Upper lobe of right lung (tissue), 1 donor: ENCODE measurements at regions of chr7 and their contacts with region 1.

Region 1: GRCh38 chr7:143008007-143008901 is 18.7 kb downstream of the OR9A2 start:
- DNase-seq: peak; percentile 87
- ATAC-seq: peak; percentile 98
- H3K4me3 ChIP-seq: no peak overlapping the region
- H3K27ac ChIP-seq: no peak overlapping the region
- H3K4me1 ChIP-seq: no peaks in the 10 kb centered on the region
- H3K27me3 ChIP-seq: peaks cover 10% of the 10 kb centered on the region
- CTCF ChIP-seq: peak; percentile 94

Region 2: DNA sequence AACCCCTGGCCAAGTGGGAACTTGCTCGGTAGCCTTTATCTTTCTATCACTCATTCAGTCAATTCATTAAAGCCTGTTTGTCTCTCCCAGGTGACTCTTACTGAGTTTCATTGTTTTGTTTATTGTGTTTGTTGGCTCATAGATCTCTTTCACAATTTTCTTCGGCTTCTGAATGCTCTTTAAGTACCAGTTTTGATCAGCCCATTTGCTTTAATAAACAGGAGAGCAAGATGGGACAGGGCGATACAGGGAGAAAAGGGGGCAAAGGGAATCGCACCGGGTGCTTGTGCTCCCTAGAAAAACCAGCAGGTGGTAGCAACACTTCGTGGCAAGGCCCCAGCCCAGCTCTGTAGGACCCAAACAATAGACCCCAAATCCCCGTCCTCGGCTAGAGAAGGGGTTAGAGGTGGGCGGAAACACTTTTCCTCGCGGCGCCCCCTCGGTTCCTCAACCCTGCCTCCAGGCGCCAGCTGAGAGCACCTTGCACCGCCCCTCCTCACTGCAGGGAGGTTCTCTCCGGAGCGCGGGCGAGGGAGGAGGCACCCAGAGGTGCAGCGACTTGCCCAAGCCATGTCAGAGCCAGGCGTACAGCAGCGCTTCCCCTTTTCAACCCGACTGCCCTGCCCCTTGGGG is 154.4 kb before region 1 on chr7:
- intact Hi-C with region 1: loop called (anchors 10 kb)
- DNase-seq: peak; percentile 87
- ATAC-seq: peak; percentile 88
- H3K4me3 ChIP-seq: peak overlapping the region; percentile 71
- H3K27ac ChIP-seq: peak overlapping the region; percentile 63
- H3K4me1 ChIP-seq: peaks cover 11% of the 10 kb centered on the region
- H3K27me3 ChIP-seq: no peaks in the 10 kb centered on the region
- CTCF ChIP-seq: peak; percentile 78

Region 3: GRCh38 chr7:143188994-143189393 is 180.7 kb after region 1 on chr7:
- intact Hi-C with region 1: no loop called
- DNase-seq: no peak
- ATAC-seq: no peak
- H3K4me3 ChIP-seq: no peak overlapping the region
- H3K27ac ChIP-seq: no peak overlapping the region
- H3K4me1 ChIP-seq: no peaks in the 10 kb centered on the region
- H3K27me3 ChIP-seq: peaks cover 3% of the 10 kb centered on the region
- CTCF ChIP-seq: no peak

Region 4: DNA sequence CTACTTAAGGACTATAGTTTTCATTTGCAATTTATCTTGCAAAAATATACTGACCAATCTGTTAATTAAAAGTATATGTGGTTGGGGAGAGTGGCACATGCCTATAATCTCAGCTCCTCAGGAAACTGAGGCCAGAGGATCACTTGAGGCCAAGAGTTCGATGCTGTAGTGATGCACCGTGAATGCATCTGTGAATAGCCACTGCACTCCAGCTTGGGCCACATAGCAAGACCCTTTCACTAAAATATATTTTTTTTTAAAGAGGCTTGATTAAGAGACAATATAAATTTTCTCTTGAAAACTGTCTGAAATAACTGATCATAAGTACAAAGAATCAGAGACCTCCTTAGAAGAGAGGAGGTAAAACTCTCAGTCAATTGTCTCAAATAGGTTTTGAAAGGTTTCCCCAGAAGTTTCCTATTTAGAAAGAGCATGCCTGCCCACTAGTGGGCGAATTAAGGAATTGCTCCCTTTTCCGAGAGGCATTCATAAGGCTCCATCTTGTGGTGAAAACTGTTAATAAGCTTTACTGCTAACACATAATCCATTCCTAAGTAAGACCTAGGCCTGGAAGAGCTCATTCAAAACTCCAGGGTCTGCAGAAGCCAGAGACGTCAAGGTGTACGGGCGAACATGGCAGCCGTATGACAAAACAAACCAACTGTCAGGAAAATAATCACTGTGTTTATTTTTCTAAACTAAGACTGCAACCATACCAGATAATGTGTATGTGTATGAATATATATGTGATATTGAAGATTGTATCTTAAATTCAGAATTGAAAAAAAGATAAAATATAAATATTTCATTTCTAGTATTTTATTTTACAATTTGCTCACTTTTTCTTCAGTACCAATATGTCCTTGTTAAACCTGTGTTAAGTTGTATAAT is 206.8 kb after region 1 on chr7:
- intact Hi-C with region 1: loop called (anchors 5 kb)
- DNase-seq: no peak
- ATAC-seq: peak; percentile 98
- H3K4me3 ChIP-seq: no peak overlapping the region
- H3K27ac ChIP-seq: no peak overlapping the region
- H3K4me1 ChIP-seq: no peaks in the 10 kb centered on the region
- H3K27me3 ChIP-seq: no peaks in the 10 kb centered on the region
- CTCF ChIP-seq: peak; percentile 99

Region 5: DNA sequence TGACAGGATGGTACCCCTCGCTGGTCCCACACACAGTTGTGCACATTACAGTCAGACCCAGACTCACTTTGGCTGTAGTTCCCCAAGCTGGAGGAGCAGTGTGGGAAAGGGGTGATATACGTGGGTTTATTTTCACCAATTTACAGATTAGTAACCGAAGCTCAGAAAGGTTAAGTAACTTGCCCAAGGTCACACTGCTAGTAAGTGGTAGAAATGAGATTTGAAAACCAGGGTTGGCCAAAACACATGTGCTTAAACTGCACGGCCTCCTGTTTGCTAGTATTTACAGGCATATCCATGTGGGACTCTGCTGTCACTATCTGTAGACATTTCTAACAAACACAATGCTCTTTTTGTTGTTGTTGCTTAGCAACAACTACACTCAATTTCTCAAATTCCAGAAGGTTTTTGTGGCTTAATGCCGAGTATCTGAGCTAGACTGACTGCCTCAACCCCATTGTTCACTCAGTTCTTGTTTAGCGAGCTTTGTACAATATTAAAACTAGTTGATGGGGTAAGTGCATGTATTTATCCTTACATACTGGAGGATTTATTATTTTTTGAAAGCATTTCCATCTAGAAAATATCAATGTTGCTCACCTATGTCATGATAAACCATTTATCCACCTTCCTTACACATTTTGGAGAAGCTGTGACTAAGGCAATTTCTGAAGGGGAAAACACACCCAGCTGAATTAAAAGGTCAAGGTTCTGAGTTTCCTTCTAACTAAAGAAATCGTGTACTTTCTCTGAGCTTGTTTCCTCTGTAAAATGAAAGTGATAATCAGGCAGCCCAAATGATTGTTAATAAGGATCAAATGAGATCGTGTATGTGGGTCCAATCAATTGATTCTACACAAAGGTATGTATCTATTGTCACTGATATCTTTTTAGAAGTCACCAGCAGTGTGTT is 271.2 kb after region 1 on chr7:
- intact Hi-C with region 1: no loop called
- DNase-seq: no peak
- ATAC-seq: peak; percentile 28
- H3K4me3 ChIP-seq: no peak overlapping the region
- H3K27ac ChIP-seq: peak overlapping the region; percentile 55
- H3K4me1 ChIP-seq: peaks cover 11% of the 10 kb centered on the region
- H3K27me3 ChIP-seq: no peaks in the 10 kb centered on the region
- CTCF ChIP-seq: no peak